IMR-90 (cell line): ENCODE measurements at regions of chr6 and their contacts with region 1.

Region 1: GRCh38 chr6:130020907-130021629 is 2.7 kb downstream of the L3MBTL3 start:
- DNase-seq: peak; percentile 95
- ATAC-seq: peak; percentile 62
- H3K4me3 ChIP-seq: peak overlapping the region; percentile 86
- H3K27ac ChIP-seq: peak overlapping the region; percentile 81
- H3K4me1 ChIP-seq: no peaks in the 10 kb centered on the region
- H3K27me3 ChIP-seq: no peaks in the 10 kb centered on the region
- CTCF ChIP-seq: peak; percentile 95
- POLR2A ChIP-seq: peak; percentile 46
- RAD21 ChIP-seq: peak; percentile 91

Region 2: GRCh38 chr6:129661536-129662405 is 359.3 kb before region 1 on chr6:
- CTCF ChIA-PET with region 1: no interaction called
- POLR2A ChIA-PET with region 1: no interaction called
- dilution Hi-C with region 1: no loop called
- in situ Hi-C with region 1: loop called (anchors 10 kb)
- intact Hi-C with region 1: no loop called
- DNase-seq: no peak
- ATAC-seq: no peak; the same call in 1 of the 2 replicates
- H3K4me3 ChIP-seq: no peak overlapping the region
- H3K27ac ChIP-seq: no peak overlapping the region
- H3K4me1 ChIP-seq: no peaks in the 10 kb centered on the region
- H3K27me3 ChIP-seq: no peaks in the 10 kb centered on the region
- CTCF ChIP-seq: no peak
- POLR2A ChIP-seq: no peak
- RAD21 ChIP-seq: no peak

Region 3: GRCh38 chr6:129766959-129767728 is 253.9 kb before region 1 on chr6:
- CTCF ChIA-PET with region 1: no interaction called
- POLR2A ChIA-PET with region 1: no interaction called
- dilution Hi-C with region 1: no loop called
- in situ Hi-C with region 1: no loop called
- intact Hi-C with region 1: loop called (anchors 2 kb)
- DNase-seq: peak; percentile 77
- ATAC-seq: peak; percentile 95
- H3K4me3 ChIP-seq: peak overlapping the region; percentile 40
- H3K27ac ChIP-seq: no peak overlapping the region
- H3K4me1 ChIP-seq: no peaks in the 10 kb centered on the region; the same call in 1 of the 2 replicates
- H3K27me3 ChIP-seq: no peaks in the 10 kb centered on the region; the same call in 1 of the 2 replicates
- CTCF ChIP-seq: no peak
- POLR2A ChIP-seq: no peak
- RAD21 ChIP-seq: no peak

Region 4: GRCh38 chr6:129893640-129894039 is 127.4 kb before region 1 on chr6:
- CTCF ChIA-PET with region 1: interaction called, 7 read pairs
- POLR2A ChIA-PET with region 1: no interaction called
- dilution Hi-C with region 1: no loop called
- in situ Hi-C with region 1: no loop called
- intact Hi-C with region 1: loop called (anchors 1 kb)
- DNase-seq: peak; percentile 51
- ATAC-seq: no peak
- H3K4me3 ChIP-seq: no peak overlapping the region
- H3K27ac ChIP-seq: no peak overlapping the region
- H3K4me1 ChIP-seq: peaks cover 3% of the 10 kb centered on the region
- H3K27me3 ChIP-seq: no peaks in the 10 kb centered on the region
- CTCF ChIP-seq: peak; percentile 51
- POLR2A ChIP-seq: no peak
- RAD21 ChIP-seq: peak; percentile 51

Region 5: GRCh38 chr6:130796313-130796905 is 775.3 kb after region 1 on chr6:
- CTCF ChIA-PET with region 1: no interaction called
- POLR2A ChIA-PET with region 1: no interaction called
- dilution Hi-C with region 1: no loop called
- in situ Hi-C with region 1: no loop called
- intact Hi-C with region 1: no loop called
- DNase-seq: peak; percentile 59
- ATAC-seq: peak; percentile 40; the same call in 1 of the 2 replicates
- H3K4me3 ChIP-seq: no peak overlapping the region
- H3K27ac ChIP-seq: no peak overlapping the region
- H3K4me1 ChIP-seq: no peaks in the 10 kb centered on the region
- H3K27me3 ChIP-seq: peaks cover 5% of the 10 kb centered on the region
- CTCF ChIP-seq: no peak
- POLR2A ChIP-seq: no peak
- RAD21 ChIP-seq: no peak